Naive thymus-derived CD8-positive, alpha-beta T cell (primary cell): ENCODE measurements at regions of chr19 and their contacts with region 1.

Region 1: DNA sequence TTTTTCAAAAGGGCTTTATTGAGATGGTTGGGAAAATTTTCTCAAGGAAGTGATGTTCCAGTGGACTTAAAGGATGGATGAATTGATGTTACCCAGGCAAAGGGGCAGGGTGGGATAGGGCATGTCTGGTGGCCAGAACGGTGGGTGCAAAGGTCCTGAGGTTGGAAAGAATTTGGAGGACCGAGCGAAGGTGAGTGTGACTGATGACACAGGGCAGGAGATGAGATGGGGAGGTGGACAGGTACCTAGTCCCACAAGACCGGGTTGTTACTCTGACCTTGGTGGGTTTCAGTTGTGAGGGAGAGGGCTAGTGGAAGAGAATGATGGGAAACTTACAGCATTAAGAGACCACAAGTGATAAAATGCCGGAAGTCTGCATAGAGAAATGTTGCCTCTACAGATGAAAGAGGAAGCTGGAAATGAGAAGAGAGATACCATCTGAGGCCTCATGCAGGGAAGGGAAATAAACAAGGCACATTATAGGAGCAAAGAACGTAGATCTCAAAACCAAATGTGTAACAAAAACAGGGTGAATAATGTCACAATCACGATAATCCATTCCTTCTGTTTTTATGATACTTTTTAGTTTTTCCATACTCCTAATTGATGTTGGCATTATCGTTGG is 4.5 kb downstream of the ADGRE1 start:
- DNase-seq: peak in 4 of 10 donors; percentile 7 to 65 (median 40)
- ATAC-seq: peak; percentile 59 to 69
- H3K4me3 Mint-ChIP-seq: peak overlapping the region; percentile 45 to 78 (median 70)
- H3K27ac Mint-ChIP-seq: peak overlapping the region; percentile 81 to 97 (median 94)
- H3K4me1 Mint-ChIP-seq: peaks cover 61 to 92% (median 84%) of the 10 kb centered on the region in 4 donors
- H3K27me3 Mint-ChIP-seq: peaks cover 0 to 4% (median 0%) of the 10 kb centered on the region in 5 donors

Region 2: GRCh38 chr19:6737284-6738046 is 154.4 kb before region 1 on chr19 and contains the start of gene GPR108:
- POLR2A ChIA-PET with region 1: interaction called, 12 read pairs
- DNase-seq: peak; percentile 97 to 100 (median 99)
- ATAC-seq: peak; percentile 82 to 84
- H3K4me3 Mint-ChIP-seq: peak within 1 kb of the TSS; percentile 89 to 100 (median 96)
- H3K27ac Mint-ChIP-seq: peak within 1 kb of the TSS; percentile 93 to 99 (median 97)
- H3K4me1 Mint-ChIP-seq: peaks cover 19 to 48% (median 44%) of the 10 kb centered on the region in 4 donors
- H3K27me3 Mint-ChIP-seq: no peaks in the 10 kb centered on the region
- polyA plus RNA-seq, gene GPR108: 51.0 to 77.1 (median 58.0) TPM

Region 3: DNA sequence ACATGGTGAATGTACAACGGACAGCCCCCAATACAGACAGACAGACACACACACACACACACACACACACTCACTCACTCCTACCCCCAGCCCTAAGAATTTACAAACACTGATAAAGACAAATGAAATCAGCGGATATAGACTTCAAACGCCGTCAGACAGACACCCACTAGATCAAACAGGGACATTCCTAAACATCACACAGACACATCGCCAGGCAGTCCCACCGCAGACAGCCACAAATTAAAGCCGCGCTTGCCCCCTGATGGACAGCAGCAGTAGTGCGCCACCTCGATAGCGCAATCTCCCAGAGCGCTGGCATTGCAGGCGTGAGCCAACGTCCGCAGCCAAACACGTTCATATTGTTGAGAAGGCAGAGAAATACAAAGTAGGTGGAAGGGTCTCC is 29.2 kb before region 1 on chr19:
- POLR2A ChIA-PET with region 1: interaction called, 40 read pairs
- DNase-seq: peak; percentile 78 to 94 (median 89)
- ATAC-seq: peak; percentile 88 to 94
- H3K4me3 Mint-ChIP-seq: peak overlapping the region; percentile 80 to 95 (median 86)
- H3K27ac Mint-ChIP-seq: peak overlapping the region; percentile 63 to 98 (median 90)
- H3K4me1 Mint-ChIP-seq: peaks cover 14 to 31% (median 24%) of the 10 kb centered on the region in 4 donors
- H3K27me3 Mint-ChIP-seq: peaks cover 0 to 1% (median 0%) of the 10 kb centered on the region in 5 donors

Region 4: DNA sequence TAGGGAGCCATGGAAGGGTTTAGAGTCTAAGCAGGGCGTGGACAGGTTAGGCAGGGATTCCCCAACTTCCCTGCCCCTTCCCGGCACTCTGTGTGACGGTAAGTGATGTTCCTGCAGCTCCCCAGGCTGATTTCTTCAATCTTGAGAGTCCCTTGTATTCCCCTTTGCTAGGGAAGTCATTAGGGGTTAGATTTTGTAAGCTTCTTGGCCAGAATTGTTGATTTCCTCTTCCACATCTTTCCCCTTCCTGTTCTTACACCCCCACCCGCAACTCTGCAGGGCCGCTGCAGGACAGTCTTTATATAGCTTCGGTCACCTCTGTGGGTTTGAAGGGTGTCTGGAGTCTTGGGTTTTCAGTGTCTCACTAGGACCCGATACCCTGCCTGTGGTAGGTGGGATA is 15.1 kb before region 1 on chr19:
- POLR2A ChIA-PET with region 1: interaction called, 16 read pairs
- DNase-seq: no peak
- ATAC-seq: no peak
- H3K4me3 Mint-ChIP-seq: peak overlapping the region in 1 of 10 donors; percentile 36
- H3K27ac Mint-ChIP-seq: peak overlapping the region in 1 of 10 donors; percentile 91
- H3K4me1 Mint-ChIP-seq: peaks cover 10 to 26% (median 17%) of the 10 kb centered on the region in 4 donors
- H3K27me3 Mint-ChIP-seq: peaks cover 0 to 2% (median 0%) of the 10 kb centered on the region in 5 donors

Region 5: DNA sequence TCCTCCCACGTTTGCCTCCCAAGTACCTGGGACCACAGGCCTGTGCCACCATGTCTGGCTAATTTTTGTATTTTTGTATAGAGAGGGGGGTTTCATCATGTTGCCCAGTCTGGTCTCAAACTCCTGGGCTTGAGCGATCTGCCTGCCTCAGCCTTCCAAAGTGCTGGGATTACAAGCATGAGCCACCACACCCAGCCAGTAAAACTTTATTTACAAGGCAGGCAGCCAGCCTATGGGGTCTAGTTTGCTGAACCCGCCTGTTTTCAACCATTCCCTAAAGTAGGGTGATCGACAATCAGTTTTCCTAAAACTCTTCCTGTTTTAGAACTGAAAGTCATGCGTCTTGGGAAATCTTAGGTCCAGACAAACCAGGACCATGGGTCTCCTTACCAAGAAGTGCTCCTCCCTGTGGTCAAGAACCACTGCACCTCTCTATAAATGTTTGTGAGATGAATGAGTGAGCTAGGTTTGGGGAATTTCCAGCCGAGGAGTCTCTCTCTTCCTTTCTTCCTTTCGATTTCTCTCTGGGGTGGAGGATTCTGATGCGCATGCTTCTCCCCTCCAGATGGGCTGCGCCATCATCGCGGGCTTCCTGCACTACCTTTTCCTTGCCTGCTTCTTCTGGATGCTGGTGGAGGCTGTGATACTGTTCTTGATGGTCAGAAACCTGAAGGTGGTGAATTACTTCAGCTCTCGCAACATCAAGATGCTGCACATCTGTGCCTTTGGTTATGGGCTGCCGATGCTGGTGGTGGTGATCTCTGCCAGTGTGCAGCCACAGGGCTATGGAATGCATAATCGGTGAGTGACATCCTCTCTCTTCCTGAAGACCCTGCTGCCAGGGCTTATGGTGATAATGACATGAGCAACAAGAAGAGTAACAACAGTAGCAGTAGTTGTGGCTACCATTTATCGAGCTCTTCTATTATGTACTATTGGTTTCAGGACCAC is 34.2 kb after region 1 on chr19:
- POLR2A ChIA-PET with region 1: interaction called, 11 read pairs
- DNase-seq: peak in 1 of 10 donors; percentile 15
- ATAC-seq: peak in 1 of 2 donors; percentile 48
- H3K4me3 Mint-ChIP-seq: peak overlapping the region in 5 of 10 donors; percentile 21 to 65 (median 49)
- H3K27ac Mint-ChIP-seq: peak overlapping the region in 8 of 10 donors; percentile 13 to 73 (median 60)
- H3K4me1 Mint-ChIP-seq: peaks cover 4 to 18% (median 11%) of the 10 kb centered on the region in 4 donors
- H3K27me3 Mint-ChIP-seq: no peaks in the 10 kb centered on the region